T-cell (primary cell): ENCODE measurements at regions of chr4 and their contacts with region 1.

Region 1: GRCh38 chr4:173025131-173025530 is 143.5 kb upstream of the GALNT7 start:
- DNase-seq: peak in 12 of 35 experiments; percentile 0 to 57 (median 6)
- ATAC-seq: peak in 3 of 4 experiments; percentile 40 to 77 (median 40)
- H3K4me3 ChIP-seq: no peak overlapping the region
- H3K4me3 Mint-ChIP-seq: no peak overlapping the region
- H3K27ac ChIP-seq: no peak overlapping the region
- H3K27ac Mint-ChIP-seq: no peak overlapping the region
- H3K4me1 ChIP-seq: no peaks in the 10 kb centered on the region
- H3K4me1 Mint-ChIP-seq: peaks cover 3 to 6% (median 4%) of the 10 kb centered on the region in 3 donors
- H3K27me3 ChIP-seq: no peaks in the 10 kb centered on the region
- H3K27me3 Mint-ChIP-seq: no peaks in the 10 kb centered on the region

Region 2: DNA sequence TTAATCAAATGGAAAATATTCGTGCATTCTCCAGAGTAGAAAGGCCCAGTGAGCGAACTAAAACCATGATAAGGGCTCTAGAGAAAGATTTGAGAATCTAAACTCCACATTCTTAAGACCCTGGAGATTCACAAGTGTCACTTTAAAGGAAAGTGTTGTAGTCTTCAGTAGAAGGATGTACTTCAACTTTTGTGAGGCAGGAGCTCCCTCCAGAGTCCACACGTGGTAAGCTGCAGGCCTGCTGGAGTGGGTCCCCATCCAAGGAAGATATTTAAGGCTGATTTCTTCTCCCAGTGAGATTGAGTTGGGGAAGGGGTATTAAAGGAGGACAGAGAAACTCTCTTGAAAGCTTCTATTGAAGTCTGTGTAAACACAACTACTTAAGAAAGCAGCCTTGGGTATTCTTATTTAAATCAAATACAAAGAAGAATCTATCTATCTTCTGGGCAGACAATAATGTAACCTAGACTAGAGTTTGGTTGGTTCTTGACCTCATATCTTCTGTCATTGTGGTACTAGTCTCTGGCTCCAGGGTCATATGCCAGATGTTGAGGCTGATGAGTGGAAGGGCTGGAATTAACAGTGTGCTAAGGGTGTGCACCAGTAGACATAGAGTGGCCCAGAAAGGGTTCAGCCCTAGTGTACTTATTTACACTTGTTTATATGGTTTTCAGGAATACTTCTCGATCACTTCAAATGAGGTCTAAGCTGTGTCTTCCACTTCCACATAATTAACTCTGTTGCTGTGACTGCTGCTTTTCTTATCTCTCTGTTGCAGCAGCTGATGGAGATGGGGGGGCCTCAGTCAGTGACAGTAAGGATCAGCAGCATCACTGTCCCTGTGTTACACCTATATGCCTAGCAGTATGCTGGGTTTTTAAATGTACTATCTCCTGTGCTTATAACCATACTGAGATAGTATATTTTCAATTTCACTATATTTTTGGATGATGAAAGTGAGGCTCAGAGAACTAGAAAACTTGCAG is 232.9 kb after region 1 on chr4:
- CTCF ChIA-PET with region 1: interaction called, 10 to 15 read pairs
- POLR2A ChIA-PET with region 1: no interaction called
- DNase-seq: peak in 34 of 35 experiments; percentile 9 to 72 (median 42)
- ATAC-seq: peak; percentile 73 to 88 (median 80)
- H3K4me3 ChIP-seq: no peak overlapping the region
- H3K4me3 Mint-ChIP-seq: no peak overlapping the region
- H3K27ac ChIP-seq: no peak overlapping the region
- H3K27ac Mint-ChIP-seq: no peak overlapping the region
- H3K4me1 ChIP-seq: no peaks in the 10 kb centered on the region
- H3K4me1 Mint-ChIP-seq: peaks cover 4 to 14% (median 6%) of the 10 kb centered on the region in 3 donors
- H3K27me3 ChIP-seq: no peaks in the 10 kb centered on the region
- H3K27me3 Mint-ChIP-seq: no peaks in the 10 kb centered on the region